IMR-90 (cell line): ENCODE measurements at regions of chr9 and their contacts with region 1.

Region 1: DNA sequence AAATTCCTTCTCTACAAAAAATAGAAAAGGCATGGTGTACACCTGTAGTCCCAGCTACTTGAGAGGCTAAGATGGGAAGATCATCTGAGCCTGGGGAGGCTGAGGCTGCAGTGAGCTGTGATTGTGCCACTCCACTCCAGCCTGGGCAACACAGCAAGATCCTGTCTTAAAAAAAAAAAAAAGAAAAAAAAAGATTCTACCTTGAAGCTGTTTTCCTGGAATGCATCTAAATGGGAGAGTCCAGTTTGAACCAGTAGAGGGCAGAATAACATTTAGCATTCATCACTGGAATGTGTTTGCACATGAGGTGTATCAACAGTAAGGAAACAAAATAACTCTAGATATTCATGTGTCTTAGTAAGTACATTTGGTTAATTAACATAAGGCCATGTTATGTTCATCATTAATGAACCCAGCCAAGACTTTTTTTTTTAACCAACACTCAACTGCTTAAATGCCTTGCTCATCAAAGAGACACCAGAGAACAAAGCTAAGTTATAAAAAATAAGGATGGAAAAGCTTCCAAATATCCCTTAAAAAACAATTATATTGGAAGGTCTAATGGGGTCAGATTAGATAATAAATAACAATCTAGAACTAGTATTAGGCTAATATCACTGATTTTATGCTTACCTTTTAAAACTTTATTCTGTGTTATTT is 16.1 kb downstream of the IFNE start:
- DNase-seq: peak; percentile 68
- ATAC-seq: peak; percentile 75
- H3K4me3 ChIP-seq: no peak overlapping the region
- H3K27ac ChIP-seq: no peak overlapping the region
- H3K4me1 ChIP-seq: no peaks in the 10 kb centered on the region
- H3K27me3 ChIP-seq: no peaks in the 10 kb centered on the region
- CTCF ChIP-seq: peak; percentile 83
- POLR2A ChIP-seq: no peak
- RAD21 ChIP-seq: peak; percentile 89

Region 2: DNA sequence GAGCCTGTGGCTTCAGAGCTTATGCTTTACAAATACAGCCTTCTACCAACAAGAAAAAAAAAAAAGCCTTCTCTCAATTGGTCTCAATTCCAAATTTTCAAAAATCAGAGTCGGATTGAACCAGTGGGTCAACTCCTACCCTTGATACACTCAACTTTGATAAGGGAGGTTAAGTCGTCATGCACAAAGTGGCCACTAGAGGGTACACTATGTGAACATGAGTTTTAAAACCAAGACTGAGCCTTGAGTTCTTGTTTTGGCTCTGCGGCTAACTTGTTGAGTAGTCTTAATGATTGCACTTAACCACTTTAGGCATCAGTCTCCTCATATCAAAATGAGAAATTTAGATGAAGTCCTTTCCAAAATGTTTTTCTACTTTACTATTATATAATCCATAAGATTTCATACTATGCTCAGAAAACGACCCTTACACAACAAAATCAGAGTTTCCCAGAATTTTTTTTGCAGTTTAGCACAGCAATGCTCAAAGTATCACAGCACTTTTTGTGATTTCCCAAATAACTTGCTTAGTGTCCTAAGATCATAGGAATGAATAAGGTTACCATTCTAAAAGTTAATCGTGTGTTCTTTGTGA is 243.6 kb after region 1 on chr9:
- CTCF ChIA-PET with region 1: interaction called, 4 read pairs
- POLR2A ChIA-PET with region 1: no interaction called
- dilution Hi-C with region 1: no loop called
- in situ Hi-C with region 1: no loop called
- intact Hi-C with region 1: loop called (anchors 2 kb)
- DNase-seq: peak; percentile 53
- ATAC-seq: peak; percentile 69
- H3K4me3 ChIP-seq: no peak overlapping the region
- H3K27ac ChIP-seq: no peak overlapping the region
- H3K4me1 ChIP-seq: peaks cover 6% of the 10 kb centered on the region; the same call in 1 of the 2 replicates
- H3K27me3 ChIP-seq: no peaks in the 10 kb centered on the region
- CTCF ChIP-seq: peak; percentile 67
- POLR2A ChIP-seq: no peak
- RAD21 ChIP-seq: peak; percentile 56

Region 3: DNA sequence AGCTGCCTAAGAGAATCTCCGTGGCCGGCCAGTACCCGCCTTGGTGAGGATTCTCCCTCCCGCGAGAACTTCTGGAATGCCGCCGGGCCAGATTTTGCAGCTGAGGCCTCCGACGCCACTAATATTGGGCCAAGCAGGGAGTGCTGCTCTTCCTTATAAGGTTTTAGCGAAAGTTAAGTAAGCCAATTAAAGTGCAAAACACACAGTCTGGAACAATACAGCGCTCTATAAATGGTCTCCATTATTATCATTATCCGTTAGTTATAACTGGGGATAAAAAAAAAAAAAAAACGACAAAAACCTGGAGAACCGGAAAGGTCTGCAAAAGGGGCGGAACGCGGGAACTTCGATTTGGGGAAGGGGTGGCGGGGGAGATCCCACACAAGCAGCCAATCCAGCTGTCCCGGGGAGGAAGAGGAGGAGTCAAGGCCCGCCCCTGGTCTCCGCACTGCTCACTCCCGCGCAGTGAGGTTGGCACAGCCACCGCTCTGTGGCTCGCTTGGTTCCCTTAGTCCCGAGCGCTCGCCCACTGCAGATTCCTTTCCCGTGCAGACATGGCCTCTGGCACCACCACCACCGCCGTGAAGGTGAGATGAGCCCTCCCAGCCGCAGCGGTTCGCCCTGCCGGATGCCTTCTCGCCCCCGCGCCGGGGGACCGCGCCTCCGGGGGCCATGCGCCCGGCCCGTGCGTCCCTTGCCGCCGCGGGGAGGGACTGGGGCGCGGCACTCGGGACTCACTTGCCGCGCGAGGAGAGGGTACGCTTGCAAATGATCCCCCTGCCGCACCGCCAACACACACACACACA is 336.4 kb after region 1 on chr9 and contains the start of gene MTAP:
- CTCF ChIA-PET with region 1: interaction called, 3 read pairs
- POLR2A ChIA-PET with region 1: interaction called, 13 read pairs
- dilution Hi-C with region 1: no loop called
- in situ Hi-C with region 1: no loop called
- intact Hi-C with region 1: no loop called
- DNase-seq: peak; percentile 93
- ATAC-seq: peak; percentile 94
- H3K4me3 ChIP-seq: peak within 1 kb of the TSS; percentile 68
- H3K27ac ChIP-seq: peak within 1 kb of the TSS; percentile 83
- H3K4me1 ChIP-seq: peaks cover 7% of the 10 kb centered on the region; the same call in 1 of the 2 replicates
- H3K27me3 ChIP-seq: no peaks in the 10 kb centered on the region
- CTCF ChIP-seq: no peak
- POLR2A ChIP-seq: 0 out of 2 replicates have a peak, but pooled peaks have one; percentile 34
- RAD21 ChIP-seq: no peak
- total RNA-seq, gene MTAP: 33.6 and 50.9 TPM in 2 replicates

Region 4: GRCh38 chr9:22257026-22257425 is 791.0 kb after region 1 on chr9:
- CTCF ChIA-PET with region 1: no interaction called
- POLR2A ChIA-PET with region 1: interaction called, 11 read pairs
- dilution Hi-C with region 1: no loop called
- in situ Hi-C with region 1: no loop called
- intact Hi-C with region 1: no loop called
- DNase-seq: no peak
- ATAC-seq: no peak
- H3K4me3 ChIP-seq: no peak overlapping the region
- H3K27ac ChIP-seq: no peak overlapping the region
- H3K4me1 ChIP-seq: no peaks in the 10 kb centered on the region
- H3K27me3 ChIP-seq: peaks cover 7% of the 10 kb centered on the region
- CTCF ChIP-seq: no peak
- POLR2A ChIP-seq: no peak
- RAD21 ChIP-seq: no peak